ENCODE measurements at regions of chr16 and their contacts with region 1.

Region 1: GRCh38 chr16:19523648-19524355 is at the start of gene CCP110:
- DNase-seq: peak; percentile 96 to 99 (median 98)
- H3K4me3 ChIP-seq: peak within 1 kb of the TSS; percentile 91 to 99 (median 98)
- H3K27ac ChIP-seq: peak within 1 kb of the TSS; percentile 70 to 91
- H3K4me1 ChIP-seq: peaks cover 16 to 43% (median 37%) of the 10 kb centered on the region in 4 experiments
- H3K27me3 ChIP-seq: no peaks in the 10 kb centered on the region

Region 2: DNA sequence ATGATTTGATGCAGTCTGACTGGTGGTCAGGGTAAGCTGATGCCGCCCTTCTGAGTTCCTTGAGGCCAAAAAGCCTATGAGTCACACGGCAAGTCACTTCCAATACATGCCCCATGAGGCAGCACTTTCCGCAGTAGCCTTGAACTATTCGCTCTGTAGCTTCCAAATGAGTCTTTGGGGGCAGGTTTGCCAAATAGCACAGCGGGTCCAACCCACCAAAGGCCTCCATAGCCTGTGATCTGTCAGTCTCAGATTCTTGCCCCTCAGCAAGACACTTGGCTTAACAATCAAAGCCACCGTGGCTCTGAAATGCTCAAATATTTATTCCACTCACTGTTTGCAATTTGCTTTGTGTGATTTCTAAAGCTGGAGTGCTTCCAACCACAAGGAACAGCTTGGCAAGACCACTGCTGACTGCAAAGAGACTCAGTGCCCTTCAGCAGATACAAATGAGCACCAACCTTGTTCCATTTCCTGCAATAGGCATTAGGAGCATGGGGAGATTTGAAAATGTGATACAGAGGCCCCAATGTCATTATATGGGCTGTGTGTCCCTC is 192.9 kb before region 1 on chr16:
- CTCF ChIA-PET with region 1: no interaction called
- POLR2A ChIA-PET with region 1: no interaction called
- DNase-seq: no peak
- H3K4me3 ChIP-seq: no peak overlapping the region
- H3K27ac ChIP-seq: no peak overlapping the region
- H3K4me1 ChIP-seq: no peaks in the 10 kb centered on the region
- H3K27me3 ChIP-seq: peaks cover 0 to 5% (median 0%) of the 10 kb centered on the region in 5 experiments

Region 3: DNA sequence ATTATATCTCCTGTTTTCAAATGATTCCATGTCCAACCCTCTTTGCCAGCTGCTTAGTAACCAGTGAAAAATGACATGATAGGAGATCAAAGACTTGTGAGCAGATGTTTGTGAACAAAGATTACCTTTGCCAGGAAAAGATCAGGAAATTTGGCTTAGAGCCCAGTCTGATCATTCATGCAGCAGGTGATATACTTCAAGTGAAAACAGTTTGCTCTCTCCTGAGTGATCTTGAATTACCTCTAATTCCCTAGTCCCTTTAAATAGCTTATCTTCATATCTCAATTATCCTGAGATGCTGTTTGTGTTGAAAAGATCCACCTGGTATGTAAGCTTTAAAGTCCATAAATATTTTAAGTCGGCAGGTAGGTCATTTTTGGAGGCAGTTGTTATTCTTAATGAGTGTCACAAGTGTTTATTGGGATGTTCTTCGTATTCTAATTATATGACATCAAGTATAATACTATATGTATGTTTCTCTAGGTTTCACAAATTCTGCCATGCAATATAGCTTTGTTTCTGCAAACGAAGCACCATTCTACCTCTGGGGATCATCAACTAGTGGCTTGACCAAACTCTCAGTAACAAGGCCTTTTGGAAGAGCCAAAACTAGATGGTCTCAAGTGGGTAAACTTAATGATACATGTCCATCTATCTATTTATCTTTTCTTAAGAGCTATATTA is 18.5 kb after region 1 on chr16:
- CTCF ChIA-PET with region 1: interaction called, 17 read pairs
- POLR2A ChIA-PET with region 1: no interaction called
- DNase-seq: no peak
- H3K4me3 ChIP-seq: no peak overlapping the region
- H3K27ac ChIP-seq: no peak overlapping the region
- H3K4me1 ChIP-seq: no peaks in the 10 kb centered on the region
- H3K27me3 ChIP-seq: no peaks in the 10 kb centered on the region

Region 4: DNA sequence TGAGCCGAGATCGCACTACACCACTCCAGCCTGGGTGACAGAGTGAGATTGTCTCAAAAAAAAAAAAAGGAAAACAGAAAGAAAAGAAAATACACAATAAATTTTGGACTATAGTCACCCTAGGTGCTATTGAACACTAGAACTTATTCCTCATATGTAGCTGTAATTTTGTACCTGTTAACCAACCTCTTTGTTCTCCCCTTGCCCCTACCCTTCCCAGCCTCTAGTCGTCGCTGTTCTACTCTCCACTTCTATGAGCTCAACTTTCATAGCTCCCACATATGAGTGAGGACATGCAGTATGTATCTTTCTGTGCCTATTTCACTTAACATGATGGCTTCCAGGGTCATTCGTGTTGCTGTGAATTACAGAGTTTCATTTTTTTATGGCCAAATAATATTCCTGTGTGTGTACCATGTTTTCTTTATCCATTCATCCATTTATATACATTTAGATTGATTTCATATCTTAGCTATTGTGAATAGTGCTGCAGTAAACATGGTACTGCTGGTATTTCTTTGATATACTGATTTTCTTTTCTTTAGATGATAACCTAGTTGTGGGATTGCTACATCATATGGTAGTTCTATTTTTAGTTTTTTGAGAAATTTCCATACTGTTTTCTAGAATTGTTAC is 60.0 kb after region 1 on chr16:
- CTCF ChIA-PET with region 1: no interaction called
- POLR2A ChIA-PET with region 1: no interaction called
- DNase-seq: peak; percentile 20 to 48 (median 45)
- H3K4me3 ChIP-seq: no peak overlapping the region
- H3K27ac ChIP-seq: no peak overlapping the region
- H3K4me1 ChIP-seq: no peaks in the 10 kb centered on the region
- H3K27me3 ChIP-seq: no peaks in the 10 kb centered on the region